Colonic mucosa (tissue), 4 donors: ENCODE measurements at regions of chr3 and their contacts with region 1.

Region 1: GRCh38 chr3:123986427-123986826 is 5.5 kb downstream of the ROPN1 start:
- DNase-seq: no peak
- H3K4me3 ChIP-seq: no peak overlapping the region
- H3K27ac ChIP-seq: no peak overlapping the region
- H3K4me1 ChIP-seq: no peaks in the 10 kb centered on the region
- H3K27me3 ChIP-seq: no peaks in the 10 kb centered on the region
- CTCF ChIP-seq: no peak

Region 2: GRCh38 chr3:123723522-123724168 is 262.8 kb before region 1 on chr3:
- intact Hi-C with region 1: loop called (anchors 10 kb)
- DNase-seq: peak; percentile 70
- H3K4me3 ChIP-seq: no peak overlapping the region
- H3K27ac ChIP-seq: no peak overlapping the region
- H3K4me1 ChIP-seq: no peaks in the 10 kb centered on the region
- H3K27me3 ChIP-seq: no peaks in the 10 kb centered on the region
- CTCF ChIP-seq: peak; percentile 74

Region 3: DNA sequence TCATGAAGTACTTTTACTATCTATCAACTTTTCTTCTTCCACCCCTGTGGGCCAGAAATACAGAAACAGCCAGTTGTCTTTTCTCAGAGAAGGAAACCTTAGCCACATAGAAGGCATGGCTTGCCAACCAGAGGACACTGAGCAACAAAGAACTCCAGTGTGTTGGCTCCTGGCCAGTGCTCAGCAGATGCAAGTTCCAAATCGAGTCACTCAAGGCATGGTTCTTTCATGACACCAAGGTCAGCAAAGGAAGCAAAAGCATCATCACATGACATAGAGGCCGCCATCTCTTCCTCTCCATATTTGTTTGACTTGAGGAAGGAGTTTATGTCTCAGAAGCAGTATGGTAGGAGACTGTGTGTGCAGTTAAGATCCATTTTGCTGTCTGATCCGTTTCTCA is 194.5 kb before region 1 on chr3:
- intact Hi-C with region 1: no loop called
- DNase-seq: peak; percentile 33
- H3K4me3 ChIP-seq: no peak overlapping the region
- H3K27ac ChIP-seq: peak overlapping the region; percentile 30
- H3K4me1 ChIP-seq: no peaks in the 10 kb centered on the region
- H3K27me3 ChIP-seq: no peaks in the 10 kb centered on the region
- CTCF ChIP-seq: no peak

Region 4: GRCh38 chr3:123884203-123884831 is 102.1 kb before region 1 on chr3 and contains the start of gene MYLK:
- intact Hi-C with region 1: loop called (anchors 10 kb)
- DNase-seq: peak; percentile 69
- H3K4me3 ChIP-seq: peak within 1 kb of the TSS; percentile 45
- H3K27ac ChIP-seq: no peak within 1 kb of the TSS
- H3K4me1 ChIP-seq: peaks cover 4% of the 10 kb centered on the region
- H3K27me3 ChIP-seq: no peaks in the 10 kb centered on the region
- CTCF ChIP-seq: no peak
- total RNA-seq, gene MYLK: 58.8 to 267 TPM